ENCODE measurements at regions of chr7 and their contacts with region 1.

Region 1: GRCh38 chr7:100705753-100706671 is at the start of gene POP7:
- DNase-seq: peak; percentile 97
- CTCF ChIP-seq: no peak

Region 2: GRCh38 chr7:100852048-100852872 is 146.2 kb after region 1 on chr7 and contains the start of gene SLC12A9:
- in situ Hi-C with region 1: loop called (anchors 10 kb)
- DNase-seq: peak; percentile 97
- CTCF ChIP-seq: peak; percentile 96